Aorta (tissue), 5 donors: ENCODE measurements at regions of chr2 and their contacts with region 1.

Region 1: GRCh38 chr2:25294573-25295462 is 46.9 kb downstream of the DNMT3A start:
- DNase-seq: peak; percentile 93
- ATAC-seq: peak; percentile 89
- H3K4me3 ChIP-seq: no peak overlapping the region
- H3K27ac ChIP-seq: peak overlapping the region; percentile 36 to 88
- H3K4me1 ChIP-seq: no peaks in the 10 kb centered on the region
- H3K27me3 ChIP-seq: no peaks in the 10 kb centered on the region

Region 2: GRCh38 chr2:25276569-25277465 is 18.0 kb before region 1 on chr2:
- intact Hi-C with region 1: loop called in 1 of 2 experiments (anchors 2 kb)
- DNase-seq: peak; percentile 86 to 93
- ATAC-seq: peak; percentile 73
- H3K4me3 ChIP-seq: peak overlapping the region; percentile 1 to 52
- H3K27ac ChIP-seq: peak overlapping the region; percentile 14 to 52
- H3K4me1 ChIP-seq: no peaks in the 10 kb centered on the region
- H3K27me3 ChIP-seq: no peaks in the 10 kb centered on the region

Region 3: DNA sequence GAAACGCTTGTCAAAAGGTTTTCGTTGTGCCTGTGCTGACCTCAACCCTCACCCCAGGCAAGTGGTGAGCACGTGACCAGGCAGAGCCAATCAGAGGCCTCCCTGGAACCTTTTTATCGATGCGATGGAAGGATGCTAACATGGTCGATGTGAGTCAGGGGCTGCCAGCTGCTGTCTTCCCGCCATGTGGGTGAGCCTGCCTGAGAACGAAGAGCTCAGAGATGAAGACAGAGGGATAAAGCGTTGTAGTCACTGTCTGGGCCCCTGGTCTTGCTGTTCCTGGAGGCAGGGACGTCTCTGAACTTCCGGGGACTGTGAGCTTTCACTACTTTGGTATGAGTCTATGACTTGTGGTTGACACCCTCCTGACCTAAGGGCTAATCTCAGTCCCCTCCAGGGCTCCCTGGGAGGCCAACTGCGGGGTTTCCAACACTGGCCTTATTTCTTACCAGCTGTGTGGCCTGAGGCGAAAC is 28.3 kb after region 1 on chr2:
- intact Hi-C with region 1: loop called in 1 of 2 experiments (anchors 5 kb)
- DNase-seq: peak; percentile 40 to 66
- ATAC-seq: no peak
- H3K4me3 ChIP-seq: no peak overlapping the region
- H3K27ac ChIP-seq: no peak overlapping the region
- H3K4me1 ChIP-seq: no peaks in the 10 kb centered on the region
- H3K27me3 ChIP-seq: no peaks in the 10 kb centered on the region

Region 4: GRCh38 chr2:25342372-25343186 is 47.8 kb after region 1 on chr2:
- intact Hi-C with region 1: loop called in 1 of 2 experiments (anchors 5 kb)
- DNase-seq: peak; percentile 90 to 94
- ATAC-seq: peak; percentile 92
- H3K4me3 ChIP-seq: peak overlapping the region; percentile 87 to 96
- H3K27ac ChIP-seq: peak overlapping the region in 1 of 2 donors; percentile 42
- H3K4me1 ChIP-seq: no peaks in the 10 kb centered on the region
- H3K27me3 ChIP-seq: no peaks in the 10 kb centered on the region

Region 5: DNA sequence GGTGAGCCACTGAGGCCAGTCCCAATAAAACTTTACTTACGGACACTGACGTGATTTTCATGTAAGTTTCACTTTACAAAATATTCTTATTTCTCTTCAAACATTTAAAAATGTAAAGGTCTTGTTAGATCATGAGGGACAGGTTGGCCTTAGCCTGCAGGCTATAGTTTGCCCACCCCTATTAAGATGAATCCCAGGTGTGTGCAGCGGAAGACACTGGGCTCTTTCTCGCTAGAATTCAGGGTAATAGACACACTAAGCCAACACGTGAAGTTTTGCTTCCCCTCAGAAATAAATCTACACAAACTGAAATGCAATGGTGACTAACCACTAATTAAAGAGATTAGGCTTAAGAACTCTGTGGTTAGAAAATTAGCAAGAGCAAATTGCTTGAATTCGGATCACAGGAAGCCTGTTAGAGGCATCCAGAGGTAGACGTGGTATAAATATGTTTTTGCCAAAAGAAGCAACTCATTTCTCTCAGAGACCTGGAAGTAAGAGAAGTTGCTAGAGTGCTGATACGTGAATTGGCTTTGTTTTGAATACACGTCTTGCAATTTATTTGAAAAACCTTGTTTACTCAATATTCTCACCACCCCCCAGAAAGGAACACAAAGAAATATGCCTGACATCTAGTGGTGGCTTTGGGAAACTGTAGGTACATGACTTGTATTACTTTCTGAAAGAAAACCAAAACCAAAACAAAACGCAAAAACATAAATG is 227.0 kb after region 1 on chr2:
- intact Hi-C with region 1: loop called in 1 of 2 experiments (anchors 10 kb)
- DNase-seq: no peak
- ATAC-seq: peak; percentile 84
- H3K4me3 ChIP-seq: peak overlapping the region; percentile 14 to 69
- H3K27ac ChIP-seq: no peak overlapping the region
- H3K4me1 ChIP-seq: no peaks in the 10 kb centered on the region
- H3K27me3 ChIP-seq: no peaks in the 10 kb centered on the region